ENCODE measurements at regions of chr12 and their contacts with region 1.

Region 1: GRCh38 chr12:94649349-94650142 is 811 bp downstream of the TMCC3 start:
- DNase-seq: peak; percentile 12 to 75 (median 42)
- H3K4me3 ChIP-seq: peak overlapping the region; percentile 44 to 92 (median 75)
- H3K27ac ChIP-seq: peak overlapping the region in 58 of 59 donors; percentile 34 to 92 (median 83)
- H3K27me3 ChIP-seq: peaks cover 0 to 9% (median 0%) of the 10 kb centered on the region in 45 donors
- CTCF ChIP-seq: peak in 51 of 56 donors; percentile 10 to 64 (median 45)

Region 2: DNA sequence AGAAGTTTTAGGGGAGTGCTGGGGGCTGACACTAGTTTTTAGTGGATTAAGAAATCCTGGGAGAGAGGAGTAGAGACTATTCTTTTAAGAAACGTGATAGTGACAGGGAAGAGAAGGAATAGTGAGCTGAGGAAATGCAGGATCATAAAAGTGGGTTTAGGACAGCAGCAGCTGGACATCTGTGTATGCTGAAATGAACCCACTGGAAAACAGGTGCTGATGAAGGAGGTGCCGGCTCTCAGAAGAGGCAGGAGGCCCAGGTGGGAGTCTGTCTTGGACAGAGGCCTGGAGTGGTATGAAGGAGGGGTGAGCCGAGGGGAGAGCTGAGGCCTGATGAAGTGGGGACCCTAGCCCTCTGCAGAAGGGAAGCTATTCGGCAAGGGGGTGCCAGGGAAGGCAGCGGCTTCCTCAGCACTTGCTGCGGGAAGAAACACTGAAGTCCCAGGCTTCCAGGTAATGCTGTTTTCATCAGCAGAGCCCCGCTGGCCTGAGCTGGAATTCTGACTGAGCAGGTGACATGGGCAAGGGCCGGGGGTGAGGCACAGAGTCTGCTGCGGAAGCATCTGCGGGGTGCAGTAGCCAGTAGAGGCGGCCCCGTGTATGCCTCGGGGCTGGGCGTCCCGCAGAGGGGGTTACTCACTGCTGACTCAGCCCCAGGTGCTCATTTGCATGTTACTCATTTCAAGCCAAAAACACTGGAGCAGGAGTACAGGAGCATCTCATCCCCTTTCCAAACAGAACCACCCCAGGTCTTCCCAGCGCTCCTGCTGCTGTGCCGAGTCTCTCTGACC is 88.9 kb before region 1 on chr12:
- intact Hi-C with region 1: loop called in 1 of 2 experiments (anchors 5 kb)
- DNase-seq: peak in 9 of 10 donors; percentile 53 to 88 (median 73)
- H3K4me3 ChIP-seq: peak overlapping the region in 5 of 59 donors; percentile 1 to 28 (median 5)
- H3K27ac ChIP-seq: peak overlapping the region in 55 of 59 donors; percentile 14 to 95 (median 83)
- H3K27me3 ChIP-seq: no peaks in the 10 kb centered on the region
- CTCF ChIP-seq: peak in 2 of 56 donors; percentile 22 to 32

Region 3: GRCh38 chr12:94762259-94762942 is 112.9 kb after region 1 on chr12:
- intact Hi-C with region 1: loop called in 1 of 2 experiments (anchors 10 kb)
- DNase-seq: no peak
- H3K4me3 ChIP-seq: no peak overlapping the region
- H3K27ac ChIP-seq: no peak overlapping the region
- H3K27me3 ChIP-seq: no peaks in the 10 kb centered on the region
- CTCF ChIP-seq: no peak

Measured in dorsolateral prefrontal cortex (tissue), 120 donors.